ENCODE measurements at regions of chr10 and their contacts with region 1.

Region 1: GRCh38 chr10:71771821-71772617 is 1.3 kb downstream of the VSIR start:
- DNase-seq: peak; percentile 66
- ATAC-seq: no peak
- H3K4me3 Mint-ChIP-seq: peak overlapping the region; percentile 92
- H3K27ac Mint-ChIP-seq: peak overlapping the region; percentile 97
- H3K4me1 Mint-ChIP-seq: peaks cover 72% of the 10 kb centered on the region
- H3K27me3 Mint-ChIP-seq: no peaks in the 10 kb centered on the region

Region 2: GRCh38 chr10:71494980-71495381 is 277.0 kb before region 1 on chr10:
- CTCF ChIA-PET with region 1: no interaction called
- POLR2A ChIA-PET with region 1: no interaction called
- intact Hi-C with region 1: no loop called
- DNase-seq: no peak
- ATAC-seq: no peak
- H3K4me3 Mint-ChIP-seq: no peak overlapping the region
- H3K27ac Mint-ChIP-seq: no peak overlapping the region
- H3K4me1 Mint-ChIP-seq: peaks cover 6% of the 10 kb centered on the region
- H3K27me3 Mint-ChIP-seq: peaks cover 9% of the 10 kb centered on the region

Region 3: DNA sequence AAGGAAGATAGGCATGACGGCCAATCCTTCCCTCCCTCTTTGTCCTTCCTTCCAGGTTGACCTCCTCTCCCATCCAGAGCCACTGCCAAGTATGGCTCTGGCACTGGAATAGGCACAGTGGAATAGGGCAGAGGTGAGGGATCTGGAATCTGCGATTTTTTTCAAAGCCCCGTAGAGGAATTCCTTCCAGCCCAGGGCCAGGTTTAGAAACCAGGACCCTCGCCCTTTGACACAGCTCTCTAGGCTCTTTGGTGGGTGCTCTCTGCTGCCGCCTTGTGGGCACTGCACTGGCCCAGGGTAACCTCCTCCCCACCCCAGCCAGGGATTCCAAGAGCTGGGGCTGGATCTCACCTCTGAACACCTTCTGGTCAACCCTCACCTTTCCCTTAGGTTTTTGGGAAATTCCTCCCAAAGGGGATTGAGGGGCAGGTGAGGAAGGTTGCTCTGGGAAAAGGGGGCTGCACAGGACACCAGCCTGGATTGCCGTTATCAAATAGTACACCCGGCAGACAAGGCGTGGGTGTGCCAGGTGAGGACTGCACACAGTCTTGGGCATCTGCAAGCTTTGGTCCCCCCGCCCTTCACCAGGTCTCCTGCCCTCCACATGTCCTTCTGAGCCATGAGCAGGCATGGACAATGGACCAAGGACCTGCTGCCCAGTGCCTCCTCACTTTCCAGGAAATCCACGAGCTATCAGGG is 75.2 kb before region 1 on chr10:
- CTCF ChIA-PET with region 1: interaction called, 54 read pairs
- POLR2A ChIA-PET with region 1: interaction called, 4 read pairs
- intact Hi-C with region 1: no loop called
- DNase-seq: peak; percentile 85
- ATAC-seq: peak; percentile 82
- H3K4me3 Mint-ChIP-seq: no peak overlapping the region
- H3K27ac Mint-ChIP-seq: no peak overlapping the region
- H3K4me1 Mint-ChIP-seq: peaks cover 37% of the 10 kb centered on the region
- H3K27me3 Mint-ChIP-seq: no peaks in the 10 kb centered on the region

Region 4: GRCh38 chr10:71727738-71728737 is 44.0 kb before region 1 on chr10:
- CTCF ChIA-PET with region 1: interaction called, 13 read pairs
- POLR2A ChIA-PET with region 1: interaction called, 7 read pairs
- intact Hi-C with region 1: loop called (anchors 1 kb)
- DNase-seq: peak; percentile 86
- ATAC-seq: peak; percentile 45
- H3K4me3 Mint-ChIP-seq: peak overlapping the region; percentile 36
- H3K27ac Mint-ChIP-seq: peak overlapping the region; percentile 96
- H3K4me1 Mint-ChIP-seq: peaks cover 96% of the 10 kb centered on the region
- H3K27me3 Mint-ChIP-seq: no peaks in the 10 kb centered on the region

Region 5: GRCh38 chr10:71756311-71757191 is 15.5 kb before region 1 on chr10:
- CTCF ChIA-PET with region 1: interaction called, 41 read pairs
- POLR2A ChIA-PET with region 1: interaction called, 14 read pairs
- intact Hi-C with region 1: loop called (anchors 1 kb)
- DNase-seq: no peak
- ATAC-seq: peak; percentile 82
- H3K4me3 Mint-ChIP-seq: peak overlapping the region; percentile 48
- H3K27ac Mint-ChIP-seq: peak overlapping the region; percentile 90
- H3K4me1 Mint-ChIP-seq: peaks cover 90% of the 10 kb centered on the region
- H3K27me3 Mint-ChIP-seq: no peaks in the 10 kb centered on the region

Region 6: GRCh38 chr10:72260588-72261322 is 488.7 kb after region 1 on chr10:
- CTCF ChIA-PET with region 1: no interaction called
- POLR2A ChIA-PET with region 1: no interaction called
- intact Hi-C with region 1: loop called in 1 of 2 experiments (anchors 2 kb)
- DNase-seq: peak; percentile 97
- ATAC-seq: peak; percentile 75
- H3K4me3 Mint-ChIP-seq: peak overlapping the region; percentile 78
- H3K27ac Mint-ChIP-seq: peak overlapping the region; percentile 97
- H3K4me1 Mint-ChIP-seq: peaks cover 70% of the 10 kb centered on the region
- H3K27me3 Mint-ChIP-seq: no peaks in the 10 kb centered on the region

Measured in activated CD4-positive, alpha-beta T cell treated with anti-CD3 and anti-CD28 coated beads for 36 hours (primary cell).